Cardiac septum (tissue), 1 donor: ENCODE measurements at regions of chr4 and their contacts with region 1.

Region 1: GRCh38 chr4:124111922-124112321 is 600.6 kb downstream of the ANKRD50 start:
- DNase-seq: no peak

Region 2: DNA sequence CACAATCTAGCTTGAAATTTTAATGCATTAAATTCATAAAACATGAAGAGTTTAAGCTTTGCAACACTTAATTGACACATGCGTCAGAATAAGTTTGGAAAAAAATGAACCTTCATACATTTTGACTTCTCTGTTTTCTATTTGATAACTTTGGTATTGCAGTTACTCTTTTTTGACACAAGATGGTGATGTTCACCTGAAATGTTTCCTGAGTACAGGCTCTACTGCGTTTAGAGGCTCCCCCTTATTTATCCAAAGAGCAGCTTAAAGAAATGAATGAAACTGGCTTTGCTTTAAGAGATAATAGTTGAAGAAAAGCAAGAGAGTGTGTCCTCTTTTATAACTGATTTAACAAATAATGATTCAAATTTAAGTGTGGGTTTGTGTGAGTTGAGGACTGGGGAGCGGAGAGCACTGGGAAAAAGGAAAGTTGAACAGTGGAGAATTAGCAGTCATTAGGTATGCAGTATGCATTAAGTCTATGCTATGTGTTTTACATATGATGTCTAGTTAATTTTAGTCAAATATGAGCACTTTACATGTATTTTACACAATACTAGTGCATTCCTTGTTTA is 1008.9 kb before region 1 on chr4:
- intact Hi-C with region 1: loop called (anchors 5 kb)
- DNase-seq: no peak

Region 3: GRCh38 chr4:123127218-123127617 is 984.7 kb before region 1 on chr4:
- intact Hi-C with region 1: loop called (anchors 2 kb)
- DNase-seq: no peak

Region 4: DNA sequence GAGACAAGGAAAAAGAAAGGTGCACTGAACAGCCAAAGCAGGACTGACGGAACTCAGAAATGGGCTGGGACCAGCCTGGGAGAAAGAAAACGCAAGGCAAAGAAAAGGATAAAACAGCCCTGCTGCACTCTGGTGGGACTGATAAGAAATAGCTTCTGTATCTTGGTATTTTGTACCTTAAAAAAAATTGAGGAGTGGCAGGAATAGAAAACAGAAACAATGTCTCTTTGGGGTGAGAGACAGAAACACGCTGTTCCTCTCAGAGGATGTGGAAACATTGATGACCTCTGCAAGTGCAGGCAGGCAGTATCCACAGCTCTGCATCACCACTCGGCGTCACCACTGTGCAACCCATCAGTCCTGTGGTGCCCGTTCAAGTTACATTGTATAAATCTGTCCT is 867.8 kb before region 1 on chr4:
- intact Hi-C with region 1: loop called (anchors 10 kb)
- DNase-seq: peak; percentile 81

Region 5: DNA sequence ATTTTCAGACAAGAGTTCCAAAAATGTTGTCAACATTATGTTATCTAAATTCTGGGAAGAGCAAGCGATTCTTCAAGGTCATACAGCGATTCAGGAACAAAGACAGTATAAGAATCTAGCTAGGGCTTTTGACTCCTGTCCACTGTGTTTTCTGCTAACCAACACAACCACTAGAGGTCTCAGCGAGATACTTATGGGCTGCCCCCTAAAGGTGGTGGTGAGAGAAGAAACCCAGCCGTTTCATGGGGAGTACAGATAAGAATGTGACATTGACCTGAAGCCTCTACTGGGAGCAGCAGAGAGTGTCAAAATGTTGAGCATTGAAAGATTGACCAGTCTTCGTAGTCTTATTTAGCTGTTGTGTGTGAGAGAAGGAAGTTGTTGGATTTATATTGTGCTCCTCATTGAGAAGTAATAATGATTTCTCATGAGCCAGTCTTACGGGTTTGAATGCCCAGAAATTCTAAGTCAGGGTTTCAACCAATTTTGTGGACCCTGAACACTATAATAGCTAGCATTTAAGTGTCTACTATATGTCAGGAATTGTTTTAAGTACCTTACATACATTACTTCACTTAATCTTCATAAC is 547.1 kb before region 1 on chr4:
- intact Hi-C with region 1: loop called (anchors 5 kb)
- DNase-seq: no peak

Region 6: GRCh38 chr4:123776254-123776653 is 335.7 kb before region 1 on chr4:
- intact Hi-C with region 1: loop called (anchors 2 kb)
- DNase-seq: no peak